Activated naive CD4-positive, alpha-beta T cell treated with anti-CD3 and anti-CD28 coated beads for 36 hours (primary cell): ENCODE measurements at regions of chr7 and their contacts with region 1.

Region 1: GRCh38 chr7:50782384-50783208 is at the start of gene GRB10:
- DNase-seq: no peak
- H3K4me3 Mint-ChIP-seq: peak within 1 kb of the TSS; percentile 65
- H3K27ac Mint-ChIP-seq: no peak within 1 kb of the TSS
- H3K4me1 Mint-ChIP-seq: peaks cover 18% of the 10 kb centered on the region
- H3K27me3 Mint-ChIP-seq: peaks cover 4% of the 10 kb centered on the region
- total RNA-seq, gene GRB10: 24.3 to 30.4 TPM

Region 2: DNA sequence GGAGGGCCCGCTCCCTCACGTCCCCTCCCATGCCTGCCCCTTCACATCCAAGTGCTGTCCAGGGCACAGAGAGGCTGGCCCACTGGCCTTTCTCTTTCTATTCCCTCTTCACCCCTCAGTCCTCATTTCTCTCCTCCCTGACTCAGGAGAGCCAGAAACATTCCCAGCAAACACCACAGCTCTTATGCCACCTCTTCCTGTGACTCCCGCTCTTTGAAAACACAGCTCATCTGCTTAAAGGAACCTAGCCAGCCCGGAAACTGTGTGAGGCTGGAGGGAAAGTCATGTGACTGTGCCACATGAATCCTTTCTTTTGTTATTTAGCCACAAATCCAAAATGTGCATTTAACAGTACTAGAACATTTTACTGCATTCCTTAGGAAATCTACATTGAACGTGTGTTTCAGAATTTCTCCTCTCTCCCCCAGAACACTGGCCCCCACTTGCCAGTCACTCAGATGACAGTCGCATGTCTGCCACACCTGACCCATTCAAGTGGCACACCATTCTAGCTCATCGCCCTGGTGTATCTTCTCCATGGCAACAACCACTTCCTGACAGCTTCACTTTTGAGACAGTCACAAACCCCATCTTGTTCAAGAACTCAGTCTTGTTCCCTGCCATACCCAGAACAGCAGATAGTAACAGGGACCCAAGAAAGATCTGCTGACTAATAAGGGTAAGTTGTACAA is 42.7 kb before region 1 on chr7:
- CTCF ChIA-PET with region 1: no interaction called
- intact Hi-C with region 1: loop called (anchors 2 kb)
- DNase-seq: peak; percentile 84
- H3K4me3 Mint-ChIP-seq: peak overlapping the region; percentile 59
- H3K27ac Mint-ChIP-seq: peak overlapping the region; percentile 84
- H3K4me1 Mint-ChIP-seq: peaks cover 34% of the 10 kb centered on the region
- H3K27me3 Mint-ChIP-seq: no peaks in the 10 kb centered on the region

Region 3: GRCh38 chr7:50826371-50827172 is 44.0 kb after region 1 on chr7:
- CTCF ChIA-PET with region 1: no interaction called
- intact Hi-C with region 1: loop called (anchors 2 kb)
- DNase-seq: peak; percentile 73
- H3K4me3 Mint-ChIP-seq: no peak overlapping the region
- H3K27ac Mint-ChIP-seq: peak overlapping the region; percentile 28
- H3K4me1 Mint-ChIP-seq: peaks cover 15% of the 10 kb centered on the region
- H3K27me3 Mint-ChIP-seq: peaks cover 2% of the 10 kb centered on the region

Region 4: GRCh38 chr7:51067757-51068156 is 285.2 kb after region 1 on chr7:
- CTCF ChIA-PET with region 1: no interaction called
- intact Hi-C with region 1: loop called (anchors 5 kb)
- DNase-seq: peak; percentile 75
- H3K4me3 Mint-ChIP-seq: no peak overlapping the region
- H3K27ac Mint-ChIP-seq: no peak overlapping the region
- H3K4me1 Mint-ChIP-seq: no peaks in the 10 kb centered on the region
- H3K27me3 Mint-ChIP-seq: no peaks in the 10 kb centered on the region